CD4-positive, alpha-beta memory T cell (primary cell): ENCODE measurements at regions of chr2 and their contacts with region 1.

Region 1: GRCh38 chr2:227460070-227460485 is 11.9 kb upstream of the AGFG1 start:
- DNase-seq: peak; percentile 47 to 77 (median 52)
- H3K4me3 ChIP-seq: no peak overlapping the region
- H3K4me3 Mint-ChIP-seq: peak overlapping the region in 7 of 8 donors; percentile 4 to 78 (median 60)
- H3K27ac ChIP-seq: no peak overlapping the region
- H3K27ac Mint-ChIP-seq: peak overlapping the region in 5 of 7 donors; percentile 1 to 70 (median 42)
- H3K4me1 ChIP-seq: peaks cover 53% of the 10 kb centered on the region
- H3K4me1 Mint-ChIP-seq: peaks cover 50 to 65% (median 55%) of the 10 kb centered on the region in 4 donors
- H3K27me3 ChIP-seq: no peaks in the 10 kb centered on the region
- H3K27me3 Mint-ChIP-seq: no peaks in the 10 kb centered on the region

Region 2: GRCh38 chr2:227324995-227325838 is 134.9 kb before region 1 on chr2 and contains the start of gene MFF:
- CTCF ChIA-PET with region 1: no interaction called
- POLR2A ChIA-PET with region 1: no interaction called
- intact Hi-C with region 1: loop called (anchors 2 kb)
- DNase-seq: peak; percentile 92 to 96 (median 93)
- H3K4me3 ChIP-seq: peak within 1 kb of the TSS; percentile 85 to 91
- H3K4me3 Mint-ChIP-seq: peak within 1 kb of the TSS; percentile 95 to 97 (median 96)
- H3K27ac ChIP-seq: peak within 1 kb of the TSS; percentile 84
- H3K27ac Mint-ChIP-seq: peak within 1 kb of the TSS; percentile 95 to 98 (median 96)
- H3K4me1 ChIP-seq: peaks cover 30% of the 10 kb centered on the region
- H3K4me1 Mint-ChIP-seq: peaks cover 21 to 59% (median 36%) of the 10 kb centered on the region in 4 donors
- H3K27me3 ChIP-seq: no peaks in the 10 kb centered on the region
- H3K27me3 Mint-ChIP-seq: no peaks in the 10 kb centered on the region
- total RNA-seq, gene MFF: 58.0 to 64.3 TPM

Region 3: DNA sequence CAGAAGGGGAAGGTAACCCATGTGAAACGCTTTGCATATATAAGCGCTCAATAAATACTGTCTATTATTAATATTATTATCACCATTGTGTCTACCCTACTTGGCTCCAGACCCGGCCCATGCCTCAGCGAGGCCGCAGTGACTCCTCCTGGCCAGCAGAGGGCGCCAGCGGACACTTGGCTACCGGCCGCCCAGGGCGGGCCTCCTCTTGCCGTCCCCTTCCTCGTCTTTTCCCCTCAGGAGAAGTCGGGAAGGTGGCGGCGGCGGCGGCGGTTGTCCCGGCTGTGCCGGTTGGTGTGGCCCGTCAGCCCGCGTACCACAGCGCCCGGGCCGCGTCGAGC is 11.8 kb after region 1 on chr2 and contains the start of gene AGFG1:
- CTCF ChIA-PET with region 1: interaction called, 17 read pairs
- POLR2A ChIA-PET with region 1: interaction called, 4 read pairs
- intact Hi-C with region 1: loop called (anchors 2 kb)
- DNase-seq: peak; percentile 79 to 86 (median 82)
- H3K4me3 ChIP-seq: peak within 1 kb of the TSS in 1 of 2 donors; percentile 65
- H3K4me3 Mint-ChIP-seq: peak within 1 kb of the TSS; percentile 88 to 97 (median 93)
- H3K27ac ChIP-seq: peak within 1 kb of the TSS; percentile 73
- H3K27ac Mint-ChIP-seq: peak within 1 kb of the TSS; percentile 83 to 97 (median 89)
- H3K4me1 ChIP-seq: peaks cover 51% of the 10 kb centered on the region
- H3K4me1 Mint-ChIP-seq: peaks cover 31 to 51% (median 43%) of the 10 kb centered on the region in 4 donors
- H3K27me3 ChIP-seq: no peaks in the 10 kb centered on the region
- H3K27me3 Mint-ChIP-seq: no peaks in the 10 kb centered on the region
- total RNA-seq, gene AGFG1: 56.5 to 62.4 TPM

Region 4: DNA sequence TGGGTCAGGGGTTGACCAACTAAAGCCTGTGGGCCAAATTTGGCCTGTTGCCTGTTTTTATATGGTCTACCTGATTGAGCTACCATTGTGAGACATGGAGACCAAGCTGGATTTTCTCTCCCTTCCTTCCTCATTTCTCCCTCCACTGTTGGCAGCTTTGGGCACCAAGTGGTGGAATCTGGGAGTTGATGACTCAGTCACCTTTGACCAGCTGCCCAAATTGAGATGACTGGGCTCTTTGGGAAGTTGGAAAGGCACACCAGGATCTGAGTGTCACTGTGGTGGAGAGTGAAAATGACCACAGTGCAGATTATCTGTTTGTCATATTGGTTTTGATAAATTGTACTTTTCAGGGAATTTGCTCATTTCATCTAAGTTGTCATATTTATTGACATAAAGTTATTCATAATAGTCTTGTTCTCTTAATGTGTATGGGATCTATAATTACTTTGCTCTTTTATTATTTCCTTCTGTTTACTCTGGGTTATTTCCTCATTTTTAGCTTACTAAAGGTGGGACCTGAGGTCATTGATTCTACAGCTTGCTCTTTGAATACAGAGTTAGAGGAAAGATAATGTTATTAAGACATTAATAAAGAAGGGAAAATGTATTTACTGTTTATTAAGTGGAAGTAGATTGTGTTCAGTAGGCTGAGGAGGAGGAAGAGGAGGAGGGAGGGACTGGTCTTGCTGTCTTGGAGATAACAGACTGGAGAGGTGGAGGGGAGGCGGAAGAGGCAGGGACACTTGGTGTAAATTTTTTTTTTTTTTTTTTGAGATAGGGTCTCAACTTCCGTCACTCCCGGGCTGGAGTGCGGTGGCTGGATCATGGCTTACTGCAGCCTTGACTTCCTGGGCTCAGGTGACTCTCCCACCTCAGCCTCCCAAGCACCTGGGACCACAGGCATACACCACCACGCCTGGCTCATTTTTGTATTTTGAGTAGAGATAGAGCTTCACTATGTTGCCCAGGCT is 43.6 kb after region 1 on chr2:
- CTCF ChIA-PET with region 1: no interaction called
- POLR2A ChIA-PET with region 1: no interaction called
- intact Hi-C with region 1: no loop called
- DNase-seq: no peak
- H3K4me3 ChIP-seq: no peak overlapping the region
- H3K4me3 Mint-ChIP-seq: peak overlapping the region; percentile 5 to 58 (median 19)
- H3K27ac ChIP-seq: no peak overlapping the region
- H3K27ac Mint-ChIP-seq: peak overlapping the region in 2 of 7 donors; percentile 1 to 39
- H3K4me1 ChIP-seq: peaks cover 73% of the 10 kb centered on the region
- H3K4me1 Mint-ChIP-seq: peaks cover 57 to 91% (median 72%) of the 10 kb centered on the region in 4 donors
- H3K27me3 ChIP-seq: no peaks in the 10 kb centered on the region
- H3K27me3 Mint-ChIP-seq: no peaks in the 10 kb centered on the region